Upper lobe of right lung (tissue), 1 donor: ENCODE measurements at regions of chr9 and their contacts with region 1.

Region 1: GRCh38 chr9:36738318-36738976 is 165.8 kb downstream of the MELK start:
- DNase-seq: no peak
- ATAC-seq: no peak
- H3K4me3 ChIP-seq: no peak overlapping the region
- H3K27ac ChIP-seq: no peak overlapping the region
- H3K4me1 ChIP-seq: no peaks in the 10 kb centered on the region
- H3K27me3 ChIP-seq: peaks cover 47% of the 10 kb centered on the region
- CTCF ChIP-seq: no peak

Region 2: DNA sequence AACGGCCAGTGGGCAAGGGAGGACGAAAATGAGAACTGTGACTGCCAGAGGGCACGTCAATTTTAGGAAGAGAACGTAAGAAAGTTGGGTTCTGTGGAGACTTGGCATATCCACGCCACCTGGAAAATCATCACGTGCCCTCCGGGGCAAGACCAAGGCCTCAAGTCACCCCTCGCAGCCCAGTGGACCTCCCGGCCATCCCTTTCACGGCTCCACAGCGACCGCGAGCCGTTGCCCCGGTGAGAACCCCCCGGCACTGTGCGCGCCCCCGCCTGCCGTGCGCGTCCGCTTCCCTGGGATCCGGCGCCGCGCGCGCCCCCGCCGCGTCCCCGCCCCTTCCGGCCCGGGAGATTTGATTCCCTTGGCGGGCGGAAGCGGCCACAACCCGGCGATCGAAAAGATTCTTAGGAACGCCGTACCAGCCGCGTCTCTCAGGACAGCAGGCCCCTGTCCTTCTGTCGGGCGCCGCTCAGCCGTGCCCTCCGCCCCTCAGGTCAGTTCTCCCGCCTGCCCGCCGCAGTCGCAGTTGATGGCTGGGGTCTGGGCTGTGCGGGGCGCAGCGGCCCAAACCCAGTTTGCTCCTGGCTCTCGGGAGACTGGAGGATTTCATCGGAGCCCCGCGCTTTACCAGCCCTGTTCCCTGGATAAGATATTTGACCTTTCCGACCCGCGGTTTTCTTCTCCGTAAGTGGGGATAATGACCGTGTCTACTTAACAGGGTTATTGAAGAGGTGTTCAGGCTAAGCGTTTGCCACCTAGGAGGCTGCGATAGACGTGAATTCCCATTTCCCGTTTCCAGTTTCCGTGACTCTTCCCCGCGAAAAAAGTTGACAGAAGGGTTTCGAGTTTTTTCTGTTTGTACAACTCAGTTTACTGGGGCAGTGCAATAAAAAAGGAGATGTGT is 165.7 kb before region 1 on chr9 and contains the start of gene MELK:
- intact Hi-C with region 1: loop called (anchors 5 kb)
- DNase-seq: peak; percentile 91
- ATAC-seq: peak; percentile 99
- H3K4me3 ChIP-seq: peak within 1 kb of the TSS; percentile 85
- H3K27ac ChIP-seq: peak within 1 kb of the TSS; percentile 75
- H3K4me1 ChIP-seq: peaks cover 13% of the 10 kb centered on the region
- H3K27me3 ChIP-seq: no peaks in the 10 kb centered on the region
- CTCF ChIP-seq: no peak
- total RNA-seq, gene MELK: 1.2 TPM